ENCODE measurements at regions of chr12 and their contacts with region 1.

Region 1: DNA sequence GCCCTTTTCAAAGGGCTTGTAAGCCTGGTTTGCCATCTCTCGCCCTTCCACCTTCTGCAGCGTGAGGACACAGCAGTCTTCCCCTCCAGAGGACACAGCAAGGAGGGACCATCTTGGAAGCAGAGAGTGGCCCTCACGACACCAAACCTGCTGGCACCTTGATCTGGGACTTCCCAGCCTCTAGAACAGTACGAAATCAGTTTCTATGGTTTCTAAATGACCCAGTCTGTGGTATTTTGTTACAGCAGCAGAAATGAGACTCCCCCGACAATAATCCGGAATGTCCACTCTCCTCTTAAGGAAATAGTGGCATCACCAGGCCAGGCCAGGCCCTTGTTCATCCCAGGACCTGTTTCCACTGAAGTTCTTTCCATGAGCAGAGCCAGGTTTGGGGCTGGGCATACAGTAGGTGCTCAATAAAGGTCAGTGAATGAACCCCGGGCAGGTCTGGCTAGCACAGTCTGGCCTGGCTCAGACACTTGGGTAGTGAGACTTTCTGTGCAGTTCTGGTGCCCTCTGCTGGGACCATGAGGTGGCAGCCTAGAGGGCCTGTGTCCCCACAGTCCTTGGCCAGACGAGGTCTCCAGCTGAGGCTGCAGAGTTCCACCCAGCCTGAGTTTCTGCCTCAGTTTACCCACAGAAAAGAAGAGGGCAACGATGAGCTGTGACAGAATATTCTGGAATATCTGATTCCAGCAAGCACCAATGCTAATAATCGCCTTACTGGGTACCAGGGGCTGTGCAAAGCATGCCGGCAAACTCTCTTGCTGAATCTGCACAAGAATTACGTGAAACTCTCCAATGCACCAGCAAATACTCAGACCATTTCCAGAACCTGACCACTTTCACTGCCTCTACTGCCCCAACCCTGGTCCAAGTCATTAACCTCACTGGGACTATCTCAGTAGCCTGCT is 14.0 kb downstream of the ABCB9 start:
- DNase-seq: peak; percentile 87
- CTCF ChIP-seq: peak; percentile 93

Region 2: GRCh38 chr12:122481861-122482260 is 470.4 kb before region 1 on chr12:
- CTCF ChIA-PET with region 1: no interaction called
- POLR2A ChIA-PET with region 1: no interaction called
- DNase-seq: no peak
- CTCF ChIP-seq: no peak

Region 3: GRCh38 chr12:122871851-122872780 is 80.1 kb before region 1 on chr12:
- CTCF ChIA-PET with region 1: interaction called, 12 read pairs
- POLR2A ChIA-PET with region 1: no interaction called
- DNase-seq: peak; percentile 64
- CTCF ChIP-seq: no peak

Region 4: DNA sequence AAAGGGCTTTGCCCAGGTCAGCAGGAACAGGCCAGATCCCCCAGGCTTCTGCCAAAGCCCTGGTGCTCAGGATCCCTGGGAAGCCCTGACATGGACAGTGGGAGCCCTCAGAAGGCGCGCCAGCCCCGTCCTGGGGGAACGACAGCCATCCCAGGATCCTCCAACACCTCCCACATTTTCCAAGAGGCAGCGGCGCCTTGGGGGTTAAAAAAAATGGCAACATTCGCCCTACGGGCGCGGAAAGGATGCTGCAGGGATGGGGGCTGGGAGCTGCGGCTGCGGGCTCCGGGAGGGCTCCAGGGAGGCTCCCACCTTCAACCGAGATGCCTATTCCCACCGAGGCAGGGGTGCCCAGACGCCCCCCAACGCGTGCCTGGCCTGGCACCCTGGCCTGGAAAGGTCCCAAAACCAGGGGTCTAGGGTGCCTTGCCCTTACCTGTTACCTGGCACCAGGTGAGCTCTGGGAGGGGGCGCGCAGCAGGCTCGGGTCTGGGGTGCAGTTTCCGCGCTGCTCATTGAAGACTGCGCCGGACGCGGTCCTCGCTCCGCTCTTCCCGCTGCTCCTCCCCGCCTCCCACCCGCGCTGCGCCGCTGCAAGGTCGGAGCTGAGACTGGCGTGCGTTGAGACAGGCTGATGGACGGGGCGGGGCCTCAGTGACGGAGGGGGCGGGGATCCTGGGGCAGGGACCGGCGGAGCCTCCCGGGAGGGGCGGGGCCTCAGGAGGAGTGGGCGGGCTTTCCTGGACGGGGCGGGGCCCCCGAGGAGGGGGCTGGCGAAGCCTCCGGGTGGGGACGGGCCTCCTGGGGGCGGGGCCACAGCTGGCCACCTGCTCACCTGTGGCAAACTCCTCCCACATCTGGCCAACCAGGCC is 13.9 kb after region 1 on chr12 and contains the start of gene ABCB9:
- CTCF ChIA-PET with region 1: interaction called, 10 read pairs
- POLR2A ChIA-PET with region 1: interaction called, 5 read pairs
- DNase-seq: peak; percentile 98
- CTCF ChIP-seq: no peak

Region 5: GRCh38 chr12:122981047-122981918 is 29.0 kb after region 1 on chr12:
- CTCF ChIA-PET with region 1: no interaction called
- POLR2A ChIA-PET with region 1: no interaction called
- DNase-seq: no peak
- CTCF ChIP-seq: no peak

Measured in GM10248 (cell line).